ENCODE measurements at regions of chrX and their contacts with region 1.

Region 1: GRCh38 chrX:104195489-104196084 is 29.3 kb downstream of the FAM199X start:
- DNase-seq: peak; percentile 33
- ATAC-seq: peak; percentile 83
- H3K4me3 ChIP-seq: no peak overlapping the region
- H3K27ac ChIP-seq: no peak overlapping the region
- H3K4me1 ChIP-seq: no peaks in the 10 kb centered on the region
- H3K27me3 ChIP-seq: no peaks in the 10 kb centered on the region
- CTCF ChIP-seq: peak; percentile 79; the same call in 1 of the 2 replicates

Region 2: GRCh38 chrX:104270920-104271512 is 75.4 kb after region 1 on chrX:
- CTCF ChIA-PET with region 1: interaction called, 5 read pairs
- POLR2A ChIA-PET with region 1: no interaction called
- in situ Hi-C with region 1: no loop called
- intact Hi-C with region 1: loop called (anchors 1 kb)
- DNase-seq: peak; percentile 39
- ATAC-seq: peak; percentile 90
- H3K4me3 ChIP-seq: peak overlapping the region; percentile 10 to 37; a peak in 3 of 4 replicates
- H3K27ac ChIP-seq: no peak overlapping the region
- H3K4me1 ChIP-seq: no peaks in the 10 kb centered on the region
- H3K27me3 ChIP-seq: peaks cover 6% of the 10 kb centered on the region; the same call in 1 of the 2 replicates
- CTCF ChIP-seq: peak; percentile 82

Measured in Panc1 (cell line).